ENCODE measurements at regions of chr1 and their contacts with region 1.

Region 1: DNA sequence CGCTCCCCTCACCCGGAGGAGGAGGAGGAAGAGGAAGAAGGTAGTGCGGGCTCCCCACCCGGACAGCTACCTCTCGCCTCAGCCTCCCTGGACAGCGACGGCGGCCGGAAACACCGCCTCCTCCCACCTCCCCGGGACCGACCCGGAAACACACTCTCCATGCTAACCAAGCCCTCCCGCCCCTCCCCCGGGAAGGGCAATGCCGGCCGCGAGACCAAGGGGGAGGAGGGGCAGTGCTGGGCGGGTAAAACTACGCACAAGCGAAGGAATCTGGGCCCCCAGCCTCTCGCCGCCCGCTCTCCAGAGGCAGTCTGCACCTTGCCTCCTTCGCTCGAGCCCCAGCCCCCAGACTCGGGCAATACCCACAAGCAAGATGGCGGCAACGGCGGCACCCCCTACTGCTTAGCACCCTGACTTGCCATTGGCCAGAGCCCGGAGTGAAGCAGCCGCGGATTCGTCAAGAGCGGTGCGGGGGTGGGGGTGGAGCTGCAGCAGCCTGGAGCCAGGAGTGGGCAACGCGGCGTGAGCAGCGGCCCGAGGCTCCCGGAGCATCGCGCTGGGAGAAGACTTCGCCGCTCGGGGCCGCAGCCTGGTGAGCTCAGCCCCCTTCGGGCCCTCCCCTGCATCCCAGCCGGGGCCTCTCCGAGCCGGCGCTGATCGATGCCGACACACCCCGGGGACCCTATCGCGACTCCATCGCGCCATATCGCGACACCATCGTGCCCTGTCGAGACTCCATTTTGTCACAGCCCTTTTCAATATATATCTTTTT is at the starts of genes KIAA0319L and NCDN:
- DNase-seq: peak; percentile 94
- ATAC-seq: peak; percentile 90
- H3K4me3 ChIP-seq: peak within 1 kb of the TSS; percentile 67 to 84 (median 82)
- H3K27ac ChIP-seq: peak within 1 kb of the TSS; percentile 98
- H3K4me1 ChIP-seq: peaks cover 42% of the 10 kb centered on the region
- H3K27me3 ChIP-seq: no peaks in the 10 kb centered on the region
- CTCF ChIP-seq: 0 out of 2 replicates have a peak, but pooled peaks have one; percentile 12
- EP300 ChIP-seq: peak in 1 of 2 experiments; percentile 35; a peak in 1 of 4 replicates
- POLR2A ChIP-seq: peak; percentile 60 to 91
- RAD21 ChIP-seq: peak; percentile 4
- total RNA-seq, gene KIAA0319L: 15.9 and 33.4 TPM in 2 replicates
- total RNA-seq, gene NCDN: 9.1 and 9.3 TPM in 2 replicates

Region 2: DNA sequence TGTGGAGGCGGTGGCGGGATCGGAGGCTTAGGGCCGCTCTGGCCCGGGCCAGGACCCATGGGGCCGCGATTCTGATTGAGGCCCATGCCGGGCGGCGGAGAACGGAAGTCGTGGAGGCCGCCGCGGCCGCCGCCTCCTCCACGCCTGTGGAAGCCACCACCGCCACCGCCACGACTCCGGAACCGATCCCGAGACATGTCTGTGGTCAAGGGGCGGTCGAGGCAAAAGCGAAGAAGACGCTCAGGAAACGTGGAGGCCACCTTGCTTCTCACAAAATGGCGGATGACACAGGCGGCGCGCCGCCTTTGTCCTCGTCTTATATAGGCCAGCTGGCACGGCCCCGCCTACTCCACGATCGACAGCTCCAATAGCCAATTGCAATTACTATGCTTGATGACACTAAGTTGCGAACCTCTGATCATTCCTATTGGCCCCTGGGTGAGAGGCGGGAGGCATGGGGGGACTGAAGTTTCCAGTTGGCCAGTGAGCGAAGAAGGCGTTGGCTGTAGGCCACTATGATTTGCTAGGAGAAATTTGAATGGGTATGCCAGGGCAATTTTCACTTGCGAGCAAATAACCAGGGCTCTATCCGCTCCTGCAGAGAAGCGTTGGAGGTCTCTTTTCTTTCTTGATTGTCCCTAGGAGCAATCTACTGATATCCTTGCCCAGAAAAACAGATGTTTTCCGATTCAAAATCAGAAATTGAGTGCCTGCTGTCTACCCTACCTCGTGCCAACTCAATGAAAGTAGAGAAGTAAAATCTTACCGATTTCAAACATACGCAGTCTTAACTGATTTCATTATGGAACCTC is 364.4 kb before region 1 on chr1 and contains the start of gene SFPQ:
- CTCF ChIA-PET with region 1: no interaction called
- POLR2A ChIA-PET with region 1: interaction called, 3 read pairs
- in situ Hi-C with region 1: loop called (anchors 10 kb)
- intact Hi-C with region 1: no loop called
- DNase-seq: peak; percentile 97
- ATAC-seq: peak; percentile 93
- H3K4me3 ChIP-seq: peak within 1 kb of the TSS; percentile 94 to 100 (median 99)
- H3K27ac ChIP-seq: peak within 1 kb of the TSS; percentile 88
- H3K4me1 ChIP-seq: peaks cover 52% of the 10 kb centered on the region
- H3K27me3 ChIP-seq: no peaks in the 10 kb centered on the region; a peak in 1 of 5 replicates
- CTCF ChIP-seq: peak; percentile 19; the same call in 1 of the 2 replicates
- EP300 ChIP-seq: no peak
- POLR2A ChIP-seq: peak; percentile 100
- RAD21 ChIP-seq: no peak
- total RNA-seq, gene SFPQ: 260 and 292 TPM in 2 replicates

Region 3: DNA sequence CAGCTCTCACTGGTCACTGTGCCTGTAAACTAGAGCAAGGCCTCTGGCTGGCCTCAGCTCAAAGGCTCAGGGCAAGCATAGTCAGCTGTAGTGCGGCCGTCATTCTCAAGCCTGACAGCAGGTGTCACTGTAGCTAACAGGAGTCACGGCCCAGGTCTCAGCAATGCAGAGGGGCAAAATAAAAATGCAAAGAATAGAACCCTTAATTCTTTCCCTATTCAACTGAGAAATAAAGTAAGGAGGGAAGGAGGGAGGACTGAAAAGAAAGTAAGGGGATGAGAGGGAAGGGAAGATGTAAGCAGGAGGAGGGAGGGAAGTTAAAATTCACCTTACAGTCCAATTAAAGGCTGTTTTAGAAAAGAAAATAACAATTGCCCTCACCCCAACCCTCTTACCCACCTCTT is 106.4 kb before region 1 on chr1:
- CTCF ChIA-PET with region 1: interaction called, 13 read pairs
- POLR2A ChIA-PET with region 1: interaction called, 17 read pairs
- in situ Hi-C with region 1: loop called (anchors 5 kb)
- intact Hi-C with region 1: no loop called
- DNase-seq: peak; percentile 55
- ATAC-seq: peak; percentile 98
- H3K4me3 ChIP-seq: no peak overlapping the region
- H3K27ac ChIP-seq: no peak overlapping the region
- H3K4me1 ChIP-seq: peaks cover 29% of the 10 kb centered on the region
- H3K27me3 ChIP-seq: no peaks in the 10 kb centered on the region
- CTCF ChIP-seq: peak; percentile 86
- EP300 ChIP-seq: no peak
- POLR2A ChIP-seq: no peak
- RAD21 ChIP-seq: peak; percentile 68

Region 4: DNA sequence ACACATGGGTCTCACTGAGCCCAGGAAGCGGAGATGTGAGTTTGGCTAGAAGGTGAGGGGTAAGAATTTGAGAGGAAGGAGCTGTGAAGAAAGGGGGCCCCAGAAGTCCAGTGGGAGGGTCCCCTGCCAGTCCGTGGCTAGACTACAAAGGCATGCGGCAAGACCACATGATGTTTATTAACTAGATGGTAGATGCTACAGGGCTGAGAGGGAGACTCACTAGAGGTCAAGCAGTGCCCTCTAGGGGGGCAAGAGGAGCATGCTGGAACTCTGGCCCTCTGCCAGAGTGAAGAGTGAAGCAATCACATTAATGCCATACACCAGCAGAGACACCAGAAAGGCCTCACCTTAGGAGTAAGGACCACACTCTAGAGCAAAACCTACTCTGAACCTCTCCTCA is 12.5 kb before region 1 on chr1:
- CTCF ChIA-PET with region 1: no interaction called
- POLR2A ChIA-PET with region 1: interaction called, 14 read pairs
- in situ Hi-C with region 1: no loop called
- intact Hi-C with region 1: no loop called
- DNase-seq: peak; percentile 85
- ATAC-seq: peak; percentile 97
- H3K4me3 ChIP-seq: no peak overlapping the region
- H3K27ac ChIP-seq: no peak overlapping the region
- H3K4me1 ChIP-seq: peaks cover 16% of the 10 kb centered on the region
- H3K27me3 ChIP-seq: no peaks in the 10 kb centered on the region
- CTCF ChIP-seq: peak; percentile 87
- EP300 ChIP-seq: no peak
- POLR2A ChIP-seq: no peak
- RAD21 ChIP-seq: peak; percentile 70

Region 5: GRCh38 chr1:35577071-35577998 is 19.9 kb after region 1 on chr1:
- CTCF ChIA-PET with region 1: no interaction called
- POLR2A ChIA-PET with region 1: interaction called, 25 read pairs
- in situ Hi-C with region 1: no loop called
- intact Hi-C with region 1: no loop called
- DNase-seq: no peak
- ATAC-seq: no peak
- H3K4me3 ChIP-seq: no peak overlapping the region
- H3K27ac ChIP-seq: no peak overlapping the region
- H3K4me1 ChIP-seq: peaks cover 28% of the 10 kb centered on the region
- H3K27me3 ChIP-seq: peaks cover 0 to 3% of the 10 kb centered on the region in 2 experiments; a peak in 1 of 5 replicates
- CTCF ChIP-seq: no peak
- EP300 ChIP-seq: no peak
- POLR2A ChIP-seq: no peak
- RAD21 ChIP-seq: no peak

Region 6: DNA sequence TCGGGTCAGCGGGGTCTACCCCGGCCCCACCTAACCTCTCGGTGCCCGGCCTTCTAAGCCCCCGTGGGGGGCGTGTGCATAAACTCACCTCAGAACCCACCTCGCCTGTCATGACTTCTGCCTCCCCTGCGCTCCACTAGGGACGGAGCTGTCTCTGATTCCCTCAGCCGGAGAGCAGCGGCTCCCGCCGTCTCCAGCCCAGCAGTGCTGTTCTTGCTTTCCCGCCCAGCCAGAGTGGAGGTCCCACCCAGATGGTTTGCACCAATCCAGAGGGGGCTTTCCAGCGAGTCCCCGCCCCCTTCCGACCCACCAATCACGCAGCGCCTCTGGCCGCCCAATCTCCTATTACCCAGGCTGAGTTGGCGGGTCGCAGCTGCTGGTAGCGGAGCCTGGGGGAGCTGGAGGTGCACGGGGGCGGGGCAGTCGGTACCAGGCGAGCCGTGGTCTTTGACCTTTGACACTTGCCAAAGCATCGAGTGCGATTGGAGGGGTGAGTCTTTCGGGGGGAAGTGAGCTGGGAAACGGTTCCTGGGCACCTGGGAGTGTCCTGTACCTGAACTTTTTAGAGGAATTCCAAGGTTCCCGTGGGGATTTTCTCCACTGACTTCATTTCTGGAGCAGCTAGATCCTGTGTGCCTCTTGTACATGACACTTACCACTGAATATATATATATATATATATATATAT is 212.4 kb after region 1 on chr1 and contains the start of gene CLSPN:
- CTCF ChIA-PET with region 1: no interaction called
- POLR2A ChIA-PET with region 1: interaction called, 10 read pairs
- in situ Hi-C with region 1: loop called (anchors 5 kb)
- intact Hi-C with region 1: no loop called
- DNase-seq: peak; percentile 94
- ATAC-seq: peak; percentile 96
- H3K4me3 ChIP-seq: peak within 1 kb of the TSS; percentile 86 to 99 (median 88)
- H3K27ac ChIP-seq: peak within 1 kb of the TSS; percentile 86
- H3K4me1 ChIP-seq: peaks cover 26% of the 10 kb centered on the region; the same call in 1 of the 2 replicates
- H3K27me3 ChIP-seq: no peaks in the 10 kb centered on the region
- CTCF ChIP-seq: no peak
- EP300 ChIP-seq: peak in 1 of 2 experiments; percentile 20; a peak in 1 of 4 replicates
- POLR2A ChIP-seq: peak; percentile 73 to 94
- RAD21 ChIP-seq: no peak
- total RNA-seq, gene CLSPN: 32.5 and 51.7 TPM in 2 replicates

Region 7: DNA sequence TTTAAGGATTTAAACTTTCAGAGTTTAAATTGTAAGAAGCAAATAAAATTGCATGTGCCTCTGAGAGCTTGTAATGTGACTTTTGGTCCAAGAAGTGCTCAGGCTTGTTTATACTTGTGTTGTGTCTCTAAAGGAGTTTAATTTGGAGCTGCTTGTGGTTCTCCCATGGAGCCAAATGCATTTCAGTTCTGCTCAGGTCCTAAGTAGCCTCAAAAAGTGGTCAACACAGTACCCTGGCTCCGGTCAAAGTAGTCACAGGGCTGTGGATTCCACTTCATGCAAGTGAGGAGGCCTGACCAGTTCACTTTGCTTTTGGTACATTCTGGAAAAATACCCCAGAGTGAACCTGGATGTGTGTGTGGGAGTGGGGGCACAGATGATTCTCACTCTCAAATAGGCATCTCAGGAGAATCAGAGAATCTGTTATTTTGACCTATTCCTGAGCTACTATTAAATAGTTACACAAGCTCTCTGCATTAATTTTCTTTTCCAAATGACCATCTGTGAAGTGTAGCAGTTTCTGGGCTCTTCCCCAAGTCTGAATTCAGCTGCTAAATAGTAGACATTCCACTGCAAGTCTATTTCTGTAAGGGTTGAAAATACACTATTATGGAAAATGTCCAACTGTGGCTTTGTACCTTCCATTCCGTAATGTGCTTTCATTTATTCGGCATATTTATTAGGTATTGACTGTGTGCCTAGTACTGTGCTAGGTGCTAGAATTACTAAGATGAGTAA is 293.8 kb after region 1 on chr1:
- CTCF ChIA-PET with region 1: no interaction called
- POLR2A ChIA-PET with region 1: no interaction called
- in situ Hi-C with region 1: no loop called
- intact Hi-C with region 1: no loop called
- DNase-seq: no peak
- ATAC-seq: no peak
- H3K4me3 ChIP-seq: no peak overlapping the region
- H3K27ac ChIP-seq: no peak overlapping the region
- H3K4me1 ChIP-seq: no peaks in the 10 kb centered on the region
- H3K27me3 ChIP-seq: no peaks in the 10 kb centered on the region
- CTCF ChIP-seq: no peak
- EP300 ChIP-seq: no peak
- POLR2A ChIP-seq: no peak
- RAD21 ChIP-seq: no peak